A549 (cell line): ENCODE measurements at regions of chr11 and their contacts with region 1.

Region 1: DNA sequence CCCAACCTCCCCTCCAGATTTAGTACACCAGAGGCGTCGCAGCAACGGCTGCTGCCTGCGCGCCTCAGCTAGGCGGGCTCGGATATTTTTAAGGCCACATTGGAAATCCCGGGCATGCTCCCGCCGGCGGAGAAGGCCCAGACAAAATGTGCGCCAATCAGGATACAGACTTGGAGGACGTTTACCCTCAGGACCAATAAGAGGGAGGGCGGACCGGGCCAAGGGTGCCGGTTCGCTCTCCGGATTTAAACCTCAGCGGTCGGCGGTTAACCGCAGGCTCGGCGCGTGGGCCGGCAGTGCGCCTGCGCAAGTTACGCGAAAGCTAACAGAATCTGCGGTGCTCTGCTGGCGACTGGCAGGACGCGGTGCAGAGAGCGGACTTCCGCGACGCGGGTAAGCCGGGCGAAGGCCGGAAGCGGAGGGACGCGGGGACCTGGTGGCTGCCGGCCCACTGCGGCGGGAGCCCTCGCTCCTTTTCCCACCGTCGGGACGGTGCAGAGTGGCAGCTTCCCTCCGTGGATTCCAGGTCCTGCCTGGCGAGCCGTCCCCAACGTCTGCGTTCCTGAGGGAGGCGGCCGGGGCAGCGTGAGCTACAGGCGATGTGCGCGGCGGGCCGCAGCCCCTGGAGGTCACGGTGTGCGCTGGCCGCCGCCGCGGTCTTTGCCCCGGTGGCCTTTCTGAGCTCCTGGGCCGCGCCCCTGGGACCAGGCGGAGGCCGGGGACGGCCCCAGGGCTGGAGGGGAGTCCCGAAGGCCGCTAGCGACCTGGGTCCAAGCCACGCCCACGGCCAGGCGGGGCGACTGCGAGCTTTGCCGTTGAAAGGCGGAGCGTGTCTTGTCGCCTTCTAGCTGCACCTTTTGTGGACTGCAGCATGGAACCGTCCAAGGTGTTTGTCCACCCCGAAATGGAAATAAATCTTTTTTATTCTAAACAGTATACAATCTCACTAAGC is at the start of gene HYLS1:
- DNase-seq: peak; percentile 89 to 97
- ATAC-seq: peak; percentile 95 to 96
- H3K4me3 ChIP-seq: peak within 1 kb of the TSS; percentile 79
- H3K27ac ChIP-seq: peak within 1 kb of the TSS; percentile 95 to 99
- H3K4me1 ChIP-seq: peaks cover 32% of the 10 kb centered on the region
- CTCF ChIP-seq: no peak
- EP300 ChIP-seq: no peak
- POLR2A ChIP-seq: peak; percentile 78
- RAD21 ChIP-seq: no peak
- polyA plus RNA-seq, gene HYLS1: 15.1 and 18.7 TPM in 2 replicates

Region 2: GRCh38 chr11:125592305-125593112 is 295.1 kb before region 1 on chr11 and contains the start of gene STT3A:
- CTCF ChIA-PET with region 1: no interaction called
- POLR2A ChIA-PET with region 1: interaction called, 10 read pairs
- DNase-seq: peak; percentile 88 to 99
- ATAC-seq: peak; percentile 97 to 98
- H3K4me3 ChIP-seq: peak within 1 kb of the TSS; percentile 78
- H3K27ac ChIP-seq: peak within 1 kb of the TSS; percentile 89 to 99
- H3K4me1 ChIP-seq: peaks cover 23% of the 10 kb centered on the region; the same call in 2 of the 3 replicates
- CTCF ChIP-seq: no peak
- EP300 ChIP-seq: no peak
- POLR2A ChIP-seq: peak; percentile 50
- RAD21 ChIP-seq: no peak
- polyA plus RNA-seq, gene STT3A: 197 and 283 TPM in 2 replicates

Region 3: GRCh38 chr11:125874556-125875124 is 13.0 kb before region 1 on chr11:
- CTCF ChIA-PET with region 1: no interaction called
- POLR2A ChIA-PET with region 1: no interaction called
- DNase-seq: peak; percentile 25 to 56
- ATAC-seq: peak; percentile 90 to 98
- H3K4me3 ChIP-seq: no peak overlapping the region
- H3K27ac ChIP-seq: no peak overlapping the region
- H3K4me1 ChIP-seq: no peaks in the 10 kb centered on the region
- CTCF ChIP-seq: peak; percentile 62
- EP300 ChIP-seq: no peak
- POLR2A ChIP-seq: no peak
- RAD21 ChIP-seq: peak; percentile 69 to 80

Region 4: DNA sequence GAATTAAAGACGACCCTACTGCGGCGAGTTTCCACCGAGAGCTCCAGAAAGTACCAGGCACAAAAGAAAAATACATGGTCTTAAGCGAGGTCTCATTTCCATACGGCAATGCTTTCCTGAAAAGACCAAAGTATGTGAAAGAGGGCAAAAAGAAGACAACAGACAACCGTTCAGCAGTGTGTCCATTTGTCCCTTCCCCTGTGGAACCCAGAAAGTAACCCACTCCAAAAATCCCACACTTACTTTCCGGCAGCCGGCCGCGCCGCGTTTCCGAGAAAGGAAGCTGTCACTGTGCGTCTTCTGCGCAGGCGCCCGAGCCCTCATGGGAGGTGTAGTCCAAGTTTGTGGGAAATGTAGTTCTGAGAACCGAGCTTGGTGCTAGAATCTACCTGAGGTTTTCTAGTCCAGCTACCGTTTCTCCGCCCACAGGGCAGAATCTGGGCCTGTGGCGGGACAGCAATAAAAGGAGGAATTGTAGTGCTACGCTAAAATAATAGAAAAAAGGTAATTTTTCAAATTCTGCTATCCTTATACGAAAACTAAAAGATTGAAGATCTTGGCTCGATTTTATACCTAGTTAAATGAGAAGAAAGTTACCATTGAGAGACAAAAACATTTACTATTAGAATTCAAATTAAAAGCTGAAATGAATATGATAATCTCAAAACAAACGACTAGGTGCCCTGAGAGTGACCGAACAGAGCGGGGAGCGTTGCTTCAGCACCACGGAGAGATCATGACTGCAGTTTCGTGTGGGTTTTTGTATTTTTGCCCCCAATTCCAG is 15.5 kb after region 1 on chr11 and contains the start of gene PUS3:
- CTCF ChIA-PET with region 1: interaction called, 4 read pairs
- POLR2A ChIA-PET with region 1: interaction called, 21 read pairs
- DNase-seq: peak; percentile 76 to 80
- ATAC-seq: peak; percentile 95 to 97
- H3K4me3 ChIP-seq: peak within 1 kb of the TSS; percentile 88
- H3K27ac ChIP-seq: peak within 1 kb of the TSS; percentile 78 to 81
- H3K4me1 ChIP-seq: 0 out of 3 replicates have a peak, but pooled peaks cover 5% of the 10 kb centered on the region
- CTCF ChIP-seq: no peak
- EP300 ChIP-seq: no peak
- POLR2A ChIP-seq: peak; percentile 53
- RAD21 ChIP-seq: no peak
- polyA plus RNA-seq, gene PUS3: 7.4 and 8.0 TPM in 2 replicates